IMR-90 (cell line): ENCODE measurements at regions of chr19 and their contacts with region 1.

Region 1: DNA sequence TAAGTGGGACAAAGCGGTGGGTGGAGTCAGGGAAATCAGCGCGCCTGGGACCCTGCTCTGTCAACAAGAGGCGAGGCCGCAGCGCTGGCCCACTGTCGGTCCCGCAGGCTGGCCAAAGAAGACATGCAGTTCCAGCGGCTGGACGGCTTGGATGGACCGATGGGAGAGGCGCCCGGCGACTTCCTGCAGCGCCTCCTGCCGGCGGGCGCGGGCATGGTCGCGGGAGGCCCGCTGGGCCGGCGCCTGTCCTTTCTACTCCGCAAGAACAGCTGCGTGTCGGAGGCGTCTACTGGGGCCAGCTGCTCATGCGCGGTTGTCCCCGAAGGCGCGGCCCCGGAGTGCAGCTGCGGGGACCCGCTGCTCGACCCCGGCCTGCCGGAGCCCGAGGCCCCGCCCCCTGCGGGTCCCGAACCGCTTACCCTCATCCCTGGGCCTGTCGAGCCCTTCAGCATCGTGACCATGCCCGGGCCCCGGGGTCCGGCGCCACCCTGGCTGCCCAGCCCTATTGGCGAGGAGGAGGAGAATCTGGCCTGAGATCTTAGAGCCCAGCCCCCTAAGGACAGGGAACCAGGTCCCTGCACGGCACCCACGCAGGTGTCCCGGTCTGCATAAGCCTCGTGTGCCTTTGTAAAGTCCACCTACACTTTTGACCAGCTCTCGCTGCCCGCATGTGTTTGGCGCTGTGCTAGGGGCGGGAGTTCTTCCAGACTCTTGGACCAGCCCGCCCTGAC is 6.1 kb downstream of the BEST2 start:
- DNase-seq: peak; percentile 61
- ATAC-seq: peak; percentile 96
- H3K4me3 ChIP-seq: peak overlapping the region; percentile 33
- H3K27ac ChIP-seq: no peak overlapping the region
- H3K4me1 ChIP-seq: no peaks in the 10 kb centered on the region
- H3K27me3 ChIP-seq: peaks cover 5% of the 10 kb centered on the region
- CTCF ChIP-seq: peak; percentile 91
- POLR2A ChIP-seq: no peak
- RAD21 ChIP-seq: peak; percentile 67

Region 2: DNA sequence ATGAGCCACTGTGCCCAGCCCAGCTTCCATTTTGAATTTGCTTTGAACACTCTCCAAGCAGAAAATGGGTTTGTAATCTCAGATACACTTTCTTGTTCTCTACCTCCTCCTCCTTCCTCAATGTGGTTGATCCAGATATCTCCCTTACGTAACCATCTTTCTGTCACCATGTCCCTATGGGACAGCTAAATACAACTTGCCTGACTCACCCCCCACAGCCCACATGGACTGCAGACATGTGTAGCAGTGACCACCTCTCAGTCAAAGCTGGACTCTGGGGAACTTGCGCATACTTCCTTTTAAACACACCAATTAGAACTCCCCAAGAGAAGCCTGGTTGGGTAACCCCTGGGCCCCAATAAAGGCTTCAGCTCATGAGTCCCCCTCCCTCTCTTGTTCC is 345.8 kb before region 1 on chr19:
- CTCF ChIA-PET with region 1: no interaction called
- POLR2A ChIA-PET with region 1: no interaction called
- dilution Hi-C with region 1: no loop called
- in situ Hi-C with region 1: no loop called
- intact Hi-C with region 1: no loop called
- DNase-seq: no peak
- ATAC-seq: no peak
- H3K4me3 ChIP-seq: no peak overlapping the region
- H3K27ac ChIP-seq: no peak overlapping the region
- H3K4me1 ChIP-seq: no peaks in the 10 kb centered on the region
- H3K27me3 ChIP-seq: no peaks in the 10 kb centered on the region
- CTCF ChIP-seq: no peak
- POLR2A ChIP-seq: no peak
- RAD21 ChIP-seq: no peak

Region 3: GRCh38 chr19:12796146-12797071 is 38.7 kb after region 1 on chr19:
- CTCF ChIA-PET with region 1: interaction called, 8 read pairs
- POLR2A ChIA-PET with region 1: no interaction called
- dilution Hi-C with region 1: no loop called
- in situ Hi-C with region 1: no loop called
- intact Hi-C with region 1: loop called (anchors 1 kb)
- DNase-seq: peak; percentile 81
- ATAC-seq: peak; percentile 38
- H3K4me3 ChIP-seq: no peak overlapping the region
- H3K27ac ChIP-seq: no peak overlapping the region
- H3K4me1 ChIP-seq: peaks cover 6% of the 10 kb centered on the region
- H3K27me3 ChIP-seq: no peaks in the 10 kb centered on the region
- CTCF ChIP-seq: peak; percentile 98; the same call in 1 of the 2 replicates
- POLR2A ChIP-seq: peak; percentile 76; the same call in 1 of the 2 replicates
- RAD21 ChIP-seq: peak; percentile 99

Region 4: GRCh38 chr19:12847159-12848139 is 89.7 kb after region 1 on chr19:
- CTCF ChIA-PET with region 1: interaction called, 21 read pairs
- POLR2A ChIA-PET with region 1: no interaction called
- dilution Hi-C with region 1: no loop called
- in situ Hi-C with region 1: no loop called
- intact Hi-C with region 1: no loop called
- DNase-seq: peak; percentile 73
- ATAC-seq: peak; percentile 100
- H3K4me3 ChIP-seq: peak overlapping the region; percentile 21; the same call in 1 of the 2 replicates
- H3K27ac ChIP-seq: no peak overlapping the region
- H3K4me1 ChIP-seq: peaks cover 3% of the 10 kb centered on the region; the same call in 1 of the 2 replicates
- H3K27me3 ChIP-seq: peaks cover 10% of the 10 kb centered on the region; the same call in 1 of the 2 replicates
- CTCF ChIP-seq: peak; percentile 98
- POLR2A ChIP-seq: no peak
- RAD21 ChIP-seq: peak; percentile 96